WTC11 (cell line): ENCODE measurements at regions of chr17 and their contacts with region 1.

Region 1: DNA sequence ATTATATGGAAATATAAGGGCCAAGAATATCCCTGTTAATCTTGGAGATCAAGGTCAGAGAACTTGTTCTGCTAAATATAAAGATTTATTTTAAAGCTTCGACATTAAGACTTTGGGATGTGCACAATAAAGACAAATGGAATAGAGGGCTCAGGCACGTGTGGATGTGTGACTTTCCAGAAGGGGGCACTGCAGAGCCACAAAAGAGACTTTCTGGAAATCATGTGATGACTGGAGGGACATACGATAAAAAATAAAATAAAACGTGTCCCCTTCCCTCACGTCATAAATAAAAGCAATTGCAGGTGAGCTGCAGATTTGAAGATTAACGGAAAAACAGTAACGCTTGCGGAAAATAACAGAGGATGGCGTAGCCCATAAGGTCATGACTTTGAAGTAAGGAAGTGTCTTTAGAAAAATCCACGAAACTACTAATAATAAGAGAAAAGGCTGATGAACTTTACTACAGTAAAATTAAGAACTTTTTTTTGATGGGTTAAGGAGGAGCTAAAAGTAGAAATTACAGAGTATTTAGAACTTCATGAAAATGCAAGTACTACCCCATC is 9.4 kb upstream of the ENGASE start:
- DNase-seq: peak; percentile 70
- ATAC-seq: no peak
- H3K4me3 Mint-ChIP-seq: no peak overlapping the region
- H3K27ac Mint-ChIP-seq: no peak overlapping the region
- H3K4me1 Mint-ChIP-seq: no peaks in the 10 kb centered on the region
- H3K27me3 Mint-ChIP-seq: no peaks in the 10 kb centered on the region; the same call in none of the 2 replicates
- CTCF ChIP-seq: peak; percentile 63

Region 2: DNA sequence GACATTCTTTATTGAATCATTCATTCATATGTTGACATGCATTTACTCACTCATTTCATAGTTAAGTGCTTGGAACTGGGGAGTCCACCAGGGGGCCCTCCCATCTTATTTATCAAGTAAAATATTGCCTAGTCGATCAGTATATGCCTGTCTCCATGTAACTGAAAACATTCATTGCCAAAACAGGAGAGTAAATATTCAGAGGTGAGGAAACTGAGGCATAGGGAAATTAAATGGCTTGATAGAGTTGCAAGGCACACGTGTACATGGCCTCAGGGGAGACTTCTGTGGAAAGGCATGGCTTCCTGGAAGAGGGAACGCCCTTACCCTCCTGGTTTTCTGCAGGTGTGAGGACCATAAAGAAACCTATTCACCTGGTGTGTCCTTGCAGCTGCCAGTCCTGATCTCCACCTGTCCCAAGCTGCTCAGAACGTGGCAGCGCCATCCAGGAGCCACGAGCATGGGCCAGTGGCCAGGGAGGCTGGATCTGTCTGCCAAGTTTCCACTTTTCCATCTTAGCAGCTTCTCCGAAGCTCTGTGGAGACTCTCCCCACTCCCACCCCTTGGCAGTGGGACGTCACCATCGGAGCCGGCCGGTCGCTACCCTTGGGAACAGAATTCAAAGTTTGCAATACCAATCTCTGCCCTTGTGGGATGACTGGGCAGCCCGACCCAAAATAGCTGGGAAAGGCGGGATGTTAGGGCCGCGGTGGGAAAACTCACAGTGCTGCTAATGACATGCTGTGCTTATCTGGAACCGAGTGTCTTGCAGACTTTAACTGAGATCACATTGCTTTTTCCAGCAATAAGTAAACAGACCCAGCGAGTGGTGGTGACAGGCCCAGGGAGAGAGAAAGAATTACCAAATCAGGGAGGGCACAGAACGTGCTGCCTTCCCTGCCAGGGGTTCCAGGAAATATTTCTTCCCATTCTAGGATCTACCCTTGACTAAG is 45.3 kb before region 1 on chr17:
- CTCF ChIA-PET with region 1: no interaction called
- POLR2A ChIA-PET with region 1: no interaction called
- DNase-seq: no peak
- ATAC-seq: no peak
- H3K4me3 Mint-ChIP-seq: no peak overlapping the region
- H3K27ac Mint-ChIP-seq: no peak overlapping the region
- H3K4me1 Mint-ChIP-seq: peaks cover 13% of the 10 kb centered on the region
- H3K27me3 Mint-ChIP-seq: peaks cover 70% of the 10 kb centered on the region
- CTCF ChIP-seq: peak; percentile 35

Region 3: GRCh38 chr17:79082311-79083190 is 17.4 kb after region 1 on chr17:
- CTCF ChIA-PET with region 1: interaction called, 13 read pairs
- POLR2A ChIA-PET with region 1: no interaction called
- DNase-seq: peak; percentile 86
- ATAC-seq: peak; percentile 82
- H3K4me3 Mint-ChIP-seq: no peak overlapping the region
- H3K27ac Mint-ChIP-seq: no peak overlapping the region
- H3K4me1 Mint-ChIP-seq: no peaks in the 10 kb centered on the region
- H3K27me3 Mint-ChIP-seq: no peaks in the 10 kb centered on the region
- CTCF ChIP-seq: peak; percentile 77